Activated naive CD4-positive, alpha-beta T cell treated with anti-CD3 and anti-CD28 coated beads for 36 hours (primary cell): ENCODE measurements at regions of chr1 and their contacts with region 1.

Region 1: DNA sequence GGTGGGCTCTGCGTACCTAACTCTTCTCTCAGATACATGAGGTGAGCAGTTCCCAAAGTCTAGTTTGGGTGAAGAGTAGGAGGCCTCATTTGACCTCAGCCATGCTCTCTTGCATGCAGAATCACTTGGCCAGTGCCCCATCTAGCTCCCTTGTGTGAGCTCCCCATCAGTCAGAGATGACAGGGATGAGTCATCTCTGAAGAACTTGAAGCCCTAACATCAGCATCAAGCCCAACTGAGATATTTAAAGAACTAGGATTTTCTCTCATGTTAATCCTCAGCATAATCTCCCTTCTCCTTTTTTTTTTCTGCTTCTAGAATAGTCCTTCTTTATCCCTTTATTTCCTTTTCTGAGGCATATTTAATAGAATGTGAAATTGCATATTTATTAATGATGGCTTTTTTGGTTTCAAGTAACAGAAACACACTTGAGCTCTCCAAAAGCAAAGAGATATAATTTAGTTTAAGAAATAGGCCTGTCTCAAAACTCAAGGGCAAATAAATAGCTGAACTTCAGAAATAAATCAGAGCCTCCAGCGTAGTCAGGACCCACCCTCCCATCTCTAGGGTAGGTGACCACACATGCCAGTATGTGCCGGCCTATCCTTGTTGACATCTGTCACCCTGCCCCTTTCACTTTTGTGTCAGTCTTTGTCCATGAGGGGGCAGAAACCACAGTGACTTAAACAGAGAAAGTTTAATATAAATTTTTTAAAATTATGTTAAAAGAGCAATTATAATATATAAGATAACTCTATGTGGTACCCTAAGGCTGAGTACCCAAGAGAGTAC is 112.3 kb downstream of the TSEN15 start:
- DNase-seq: no peak
- H3K4me3 Mint-ChIP-seq: no peak overlapping the region
- H3K27ac Mint-ChIP-seq: no peak overlapping the region
- H3K4me1 Mint-ChIP-seq: no peaks in the 10 kb centered on the region
- H3K27me3 Mint-ChIP-seq: peaks cover 1% of the 10 kb centered on the region

Region 2: DNA sequence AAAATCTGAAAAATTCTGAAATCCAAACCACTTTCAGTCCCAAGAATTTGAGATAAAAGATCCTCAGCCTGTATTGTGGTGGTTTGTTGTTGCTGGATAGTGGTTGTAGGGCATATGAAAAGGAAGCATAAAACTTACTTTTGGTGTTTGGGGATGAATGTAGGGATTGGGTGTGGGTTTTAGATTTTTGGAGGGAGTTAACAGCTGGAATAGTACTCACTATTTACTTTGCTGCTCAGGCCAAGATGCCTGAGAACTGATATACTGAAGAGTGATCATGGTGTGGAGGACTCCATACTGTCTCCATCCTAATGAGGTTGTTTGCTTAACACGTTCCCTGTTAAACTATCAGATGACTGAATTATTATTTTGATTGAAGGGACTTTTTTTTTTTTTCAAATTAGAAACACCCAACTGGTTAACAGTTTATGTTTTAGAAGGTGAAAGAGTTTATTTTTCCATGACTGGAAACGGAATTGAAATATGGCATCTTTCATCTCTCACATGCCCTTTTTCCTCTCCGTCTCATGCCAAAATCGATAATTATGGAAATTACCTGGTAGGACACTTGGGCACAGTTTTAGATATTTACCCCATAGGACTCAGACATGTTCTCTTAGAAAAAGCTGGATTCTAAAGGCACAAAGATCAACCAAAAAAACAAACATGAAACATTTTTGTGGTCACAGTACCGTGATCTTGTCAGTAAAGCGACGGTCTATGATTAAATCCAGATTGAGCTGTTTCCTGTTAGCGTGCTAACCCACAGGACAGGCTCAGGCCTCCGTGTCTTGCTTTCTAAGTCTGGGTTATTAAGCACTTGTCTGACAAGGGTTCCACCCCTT is 321.7 kb before region 1 on chr1:
- CTCF ChIA-PET with region 1: no interaction called
- intact Hi-C with region 1: loop called (anchors 2 kb)
- DNase-seq: peak; percentile 58
- H3K4me3 Mint-ChIP-seq: peak overlapping the region; percentile 56
- H3K27ac Mint-ChIP-seq: peak overlapping the region; percentile 88
- H3K4me1 Mint-ChIP-seq: peaks cover 28% of the 10 kb centered on the region
- H3K27me3 Mint-ChIP-seq: no peaks in the 10 kb centered on the region

Region 3: GRCh38 chr1:184036517-184036949 is 127.3 kb before region 1 on chr1:
- CTCF ChIA-PET with region 1: no interaction called
- intact Hi-C with region 1: loop called (anchors 1 kb)
- DNase-seq: peak; percentile 23
- H3K4me3 Mint-ChIP-seq: peak overlapping the region; percentile 58
- H3K27ac Mint-ChIP-seq: no peak overlapping the region
- H3K4me1 Mint-ChIP-seq: peaks cover 15% of the 10 kb centered on the region
- H3K27me3 Mint-ChIP-seq: peaks cover 68% of the 10 kb centered on the region

Region 4: DNA sequence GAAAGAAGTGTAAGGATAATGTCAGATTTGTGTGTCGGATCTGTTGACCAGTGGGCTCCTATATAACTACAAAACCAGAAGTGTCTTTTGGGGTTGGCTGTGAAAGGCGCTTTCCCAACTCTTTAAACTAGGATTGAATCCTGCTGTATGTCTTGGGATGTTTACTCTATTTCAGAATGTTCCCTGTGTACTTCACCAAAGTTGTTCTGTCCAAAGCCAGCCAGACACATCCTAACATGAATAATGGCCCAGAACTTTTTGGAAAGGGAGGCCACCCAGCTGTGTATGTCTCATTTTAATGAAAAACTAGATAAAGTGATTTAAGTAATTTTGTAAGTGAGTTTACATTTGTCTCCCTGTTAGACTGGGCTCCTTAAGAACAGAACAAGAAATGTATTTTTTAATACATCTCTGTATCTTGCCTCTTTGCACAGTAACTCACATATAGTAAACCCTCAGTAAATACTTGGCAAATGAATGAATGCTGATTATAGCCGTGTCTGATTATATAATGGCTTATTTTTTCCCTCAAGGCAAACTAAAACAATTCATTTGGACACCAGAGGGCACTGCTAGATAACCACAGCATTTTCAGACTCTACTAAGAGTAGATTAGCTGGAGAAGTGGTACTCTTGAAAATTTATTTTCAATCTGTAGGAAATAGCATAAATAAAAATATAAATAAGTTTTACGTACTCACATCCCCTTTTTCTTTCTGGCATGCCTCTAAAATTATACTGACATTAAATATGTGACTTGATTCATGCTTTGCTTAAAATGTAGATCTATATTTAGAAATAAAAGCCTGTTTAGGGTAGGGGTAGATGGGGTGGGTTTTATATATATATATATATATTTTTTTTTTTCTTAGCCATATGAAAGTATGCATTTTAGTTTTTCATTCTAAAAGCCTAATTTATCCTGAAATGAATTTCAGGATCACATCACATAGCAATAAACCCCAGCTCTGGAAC is 88.5 kb before region 1 on chr1:
- CTCF ChIA-PET with region 1: no interaction called
- intact Hi-C with region 1: loop called (anchors 5 kb)
- DNase-seq: peak; percentile 27
- H3K4me3 Mint-ChIP-seq: no peak overlapping the region
- H3K27ac Mint-ChIP-seq: no peak overlapping the region
- H3K4me1 Mint-ChIP-seq: peaks cover 15% of the 10 kb centered on the region
- H3K27me3 Mint-ChIP-seq: no peaks in the 10 kb centered on the region

Region 5: DNA sequence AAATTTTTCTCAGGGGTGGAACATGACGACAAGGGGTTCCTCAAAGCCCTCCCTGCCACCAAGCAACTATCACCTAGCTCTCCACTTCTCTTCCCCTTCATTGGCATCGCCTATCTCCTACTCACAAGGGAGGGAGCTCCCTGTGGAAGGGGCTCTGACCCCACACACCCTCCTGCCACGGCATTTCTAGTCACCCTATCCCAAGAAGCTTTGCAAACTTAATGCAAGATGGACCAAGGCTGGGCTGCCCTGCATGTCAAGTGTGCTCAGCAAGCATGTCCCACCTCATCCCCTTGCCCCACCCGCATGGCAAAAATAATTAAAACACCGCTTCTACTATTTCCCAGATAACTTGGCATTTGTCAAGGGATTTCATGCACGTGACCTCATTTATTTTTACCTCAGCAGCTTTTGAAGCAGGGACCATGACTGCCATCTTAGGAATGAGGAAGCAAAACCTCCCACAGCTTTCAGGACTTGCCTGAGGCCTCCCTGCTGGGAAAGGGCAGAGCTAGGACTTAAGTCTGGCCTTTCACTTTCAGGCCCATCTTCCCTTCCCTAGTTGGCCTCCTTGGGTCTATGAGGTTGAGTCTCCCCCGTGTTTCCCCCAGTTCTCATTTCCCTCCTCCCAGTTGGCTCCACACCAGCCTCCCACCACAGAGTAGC is 48.9 kb after region 1 on chr1:
- CTCF ChIA-PET with region 1: no interaction called
- intact Hi-C with region 1: no loop called
- DNase-seq: no peak
- H3K4me3 Mint-ChIP-seq: no peak overlapping the region
- H3K27ac Mint-ChIP-seq: no peak overlapping the region
- H3K4me1 Mint-ChIP-seq: no peaks in the 10 kb centered on the region
- H3K27me3 Mint-ChIP-seq: peaks cover 15% of the 10 kb centered on the region

Region 6: DNA sequence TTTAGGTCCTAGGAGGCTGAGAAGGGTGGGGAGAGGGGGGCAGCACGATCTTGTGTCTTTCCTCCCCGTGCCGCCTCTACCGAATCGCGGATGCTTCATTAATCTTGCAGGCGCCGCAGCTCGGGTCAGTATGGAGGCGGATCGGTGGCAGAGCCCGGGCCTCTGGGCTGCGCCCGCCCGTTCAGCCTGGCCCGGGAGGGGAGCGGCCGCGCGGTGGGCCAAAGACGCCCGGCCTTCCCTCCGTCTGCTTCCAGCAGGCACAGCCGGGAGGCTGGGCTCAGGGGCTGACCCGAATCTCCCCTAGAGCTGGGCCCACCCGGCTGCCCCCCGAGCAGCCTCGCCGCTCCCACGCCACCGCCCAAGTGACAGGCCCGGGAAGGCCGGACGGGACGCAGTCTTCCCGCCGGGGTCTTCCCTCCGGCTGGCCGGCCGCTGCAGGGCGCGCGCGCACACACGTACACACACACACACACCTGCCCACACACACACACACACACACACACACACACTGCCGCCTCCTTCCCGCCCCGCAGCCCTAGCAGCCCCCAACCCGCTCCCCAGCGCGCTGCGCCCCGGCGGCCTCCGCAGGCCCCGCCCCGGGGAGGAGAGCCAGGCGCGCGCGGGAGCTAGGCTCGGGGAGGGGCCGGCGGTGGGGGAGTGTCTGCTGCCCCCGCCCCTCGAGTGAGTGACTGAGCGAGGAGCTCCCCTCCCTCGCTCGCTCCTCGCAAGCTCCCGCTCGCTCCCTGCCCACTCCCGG is 222.6 kb after region 1 on chr1 and contains the start of gene C1orf21:
- CTCF ChIA-PET with region 1: no interaction called
- intact Hi-C with region 1: loop called (anchors 1 kb)
- DNase-seq: peak; percentile 80
- H3K4me3 Mint-ChIP-seq: peak within 1 kb of the TSS; percentile 78
- H3K27ac Mint-ChIP-seq: no peak within 1 kb of the TSS
- H3K4me1 Mint-ChIP-seq: peaks cover 14% of the 10 kb centered on the region
- H3K27me3 Mint-ChIP-seq: peaks cover 59% of the 10 kb centered on the region
- total RNA-seq, gene C1orf21: 1.2 to 1.4 TPM

Region 7: GRCh38 chr1:184399192-184399847 is 235.4 kb after region 1 on chr1:
- CTCF ChIA-PET with region 1: no interaction called
- intact Hi-C with region 1: no loop called
- DNase-seq: no peak
- H3K4me3 Mint-ChIP-seq: no peak overlapping the region
- H3K27ac Mint-ChIP-seq: no peak overlapping the region
- H3K4me1 Mint-ChIP-seq: no peaks in the 10 kb centered on the region
- H3K27me3 Mint-ChIP-seq: peaks cover 15% of the 10 kb centered on the region

Region 8: GRCh38 chr1:184754476-184755225 is 590.8 kb after region 1 on chr1 and contains the start of gene EDEM3:
- CTCF ChIA-PET with region 1: no interaction called
- intact Hi-C with region 1: loop called (anchors 2 kb)
- DNase-seq: peak; percentile 98
- H3K4me3 Mint-ChIP-seq: peak within 1 kb of the TSS; percentile 88
- H3K27ac Mint-ChIP-seq: peak within 1 kb of the TSS; percentile 88
- H3K4me1 Mint-ChIP-seq: peaks cover 36% of the 10 kb centered on the region
- H3K27me3 Mint-ChIP-seq: no peaks in the 10 kb centered on the region
- total RNA-seq, gene EDEM3: 9.9 to 10.5 TPM

Region 9: GRCh38 chr1:184881941-184882913 is 718.4 kb after region 1 on chr1:
- CTCF ChIA-PET with region 1: no interaction called
- intact Hi-C with region 1: loop called (anchors 1 kb)
- DNase-seq: peak; percentile 31
- H3K4me3 Mint-ChIP-seq: no peak overlapping the region
- H3K27ac Mint-ChIP-seq: peak overlapping the region; percentile 79
- H3K4me1 Mint-ChIP-seq: peaks cover 25% of the 10 kb centered on the region
- H3K27me3 Mint-ChIP-seq: peaks cover 25% of the 10 kb centered on the region